ENCODE measurements at regions of chr5 and their contacts with region 1.

Region 1: DNA sequence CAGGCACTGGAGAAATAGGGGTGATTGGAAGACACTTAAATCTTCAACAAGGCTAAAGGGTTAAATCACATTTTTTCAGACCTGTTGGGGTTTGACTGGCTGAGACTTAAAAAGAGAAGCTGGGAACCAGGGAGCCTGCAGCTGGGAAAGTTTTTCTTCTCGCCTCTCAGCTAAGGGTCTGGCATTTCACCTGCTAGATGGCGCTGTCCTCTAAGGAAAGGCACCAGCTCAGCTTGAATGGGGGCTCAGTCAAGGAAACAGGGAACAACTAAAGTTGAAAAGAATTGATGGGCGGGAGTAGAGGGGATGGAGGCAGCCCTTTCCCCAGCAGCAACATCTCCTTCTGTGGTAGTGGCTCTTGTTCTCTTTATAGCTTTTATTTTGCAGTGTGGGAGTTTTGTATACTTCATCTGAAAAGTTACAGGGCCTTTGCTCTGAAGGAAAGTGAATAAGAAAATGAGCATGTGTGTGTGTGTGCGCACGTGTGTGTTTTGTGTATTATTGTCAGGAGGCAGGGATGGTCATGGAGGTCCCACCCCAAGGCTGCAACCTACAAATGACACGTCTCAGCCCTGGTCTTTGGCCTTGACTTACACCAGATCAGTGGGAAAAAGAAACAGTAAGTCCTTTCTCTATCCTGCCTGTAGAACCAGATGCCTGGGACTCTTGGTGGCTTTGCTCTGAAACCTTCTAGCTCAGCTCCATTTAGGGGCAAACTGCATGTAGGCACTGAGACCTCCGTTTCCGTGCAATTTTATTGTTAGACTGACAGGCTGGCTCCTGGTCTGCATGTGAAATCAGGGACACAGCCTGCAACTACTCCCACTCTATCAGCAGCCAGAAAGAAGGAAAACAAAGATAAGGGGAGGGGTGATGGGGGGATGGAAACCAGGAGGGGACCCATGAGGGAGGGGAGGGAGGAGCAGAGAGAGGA is 316.2 kb upstream of the CLINT1 start:
- DNase-seq: peak; percentile 68
- ATAC-seq: peak; percentile 94

Region 2: DNA sequence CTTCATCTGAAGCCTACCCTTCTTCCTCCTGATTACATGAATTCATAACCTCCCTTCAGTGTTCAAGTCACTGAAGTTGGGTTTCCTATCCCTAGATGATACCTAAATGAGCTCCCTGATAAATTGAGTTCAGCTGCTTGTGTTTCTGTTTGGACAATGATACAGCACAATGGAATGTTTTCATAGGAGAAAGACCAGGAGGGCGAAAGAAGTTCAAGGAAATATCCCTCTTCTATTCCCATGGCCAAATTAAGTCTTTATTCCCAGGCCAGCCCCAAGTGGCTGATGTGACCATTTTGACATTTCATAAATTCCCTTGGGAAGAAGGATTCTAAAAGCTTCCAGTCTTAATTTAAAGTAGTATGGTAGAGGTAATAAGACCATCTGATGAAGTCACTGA is 239.6 kb after region 1 on chr5:
- intact Hi-C with region 1: no loop called
- DNase-seq: no peak
- ATAC-seq: peak; percentile 88

Region 3: DNA sequence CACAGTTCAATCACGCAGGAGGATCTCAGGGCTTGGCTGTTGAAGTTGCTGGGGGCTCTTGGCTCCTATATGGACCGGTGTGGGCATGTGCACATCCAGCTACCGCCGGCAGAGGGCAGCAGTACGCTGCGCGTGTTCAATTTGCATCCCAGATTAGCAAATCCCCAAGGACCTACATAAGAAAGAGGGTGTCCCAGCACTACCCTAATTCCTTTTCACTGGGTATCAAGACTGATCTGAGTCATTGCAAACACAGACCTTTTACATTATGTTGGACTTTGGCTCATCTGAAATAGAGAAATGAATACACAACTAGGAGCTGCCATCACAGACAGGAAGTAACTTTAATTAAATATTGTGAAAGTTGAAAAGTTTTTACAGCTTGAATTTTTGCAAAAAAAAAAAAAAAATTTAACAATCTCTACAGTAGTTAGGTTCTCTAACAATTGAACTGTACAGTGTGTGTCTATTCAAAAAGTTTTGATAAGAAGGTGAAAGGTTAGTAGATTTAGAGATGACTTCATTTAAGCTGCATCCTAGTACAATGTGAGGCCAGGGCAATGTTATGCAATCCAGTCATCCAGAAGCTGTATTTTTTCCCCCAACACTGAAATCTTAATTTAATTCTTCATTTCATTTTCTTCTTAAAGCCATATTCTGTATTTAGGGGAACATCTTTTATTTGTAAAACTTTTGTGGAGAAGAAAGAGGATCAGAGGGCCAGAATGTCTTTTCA is 520.6 kb after region 1 on chr5:
- intact Hi-C with region 1: loop called (anchors 5 kb)
- DNase-seq: peak; percentile 83
- ATAC-seq: peak; percentile 82

Measured in Right ventricle myocardium superior (tissue), 1 donor.